Activated CD4-positive, alpha-beta memory T cell treated with anti-CD3 and anti-CD28 coated beads, Interleukin-2, amount 10 ng/mL, durations not matched to agents 7 days and 5 days (primary cell): ENCODE measurements at regions of chr6 and their contacts with region 1.

Region 1: GRCh38 chr6:20202324-20202658 is 10.0 kb downstream of the MBOAT1 start:
- DNase-seq: no peak
- H3K4me3 Mint-ChIP-seq: no peak overlapping the region
- H3K27ac Mint-ChIP-seq: peak overlapping the region; percentile 22
- H3K4me1 Mint-ChIP-seq: peaks cover 80% of the 10 kb centered on the region
- H3K27me3 Mint-ChIP-seq: no peaks in the 10 kb centered on the region

Region 2: GRCh38 chr6:20096506-20096905 is 105.8 kb before region 1 on chr6:
- CTCF ChIA-PET with region 1: no interaction called
- POLR2A ChIA-PET with region 1: no interaction called
- DNase-seq: no peak
- H3K4me3 Mint-ChIP-seq: no peak overlapping the region
- H3K27ac Mint-ChIP-seq: no peak overlapping the region
- H3K4me1 Mint-ChIP-seq: no peaks in the 10 kb centered on the region
- H3K27me3 Mint-ChIP-seq: no peaks in the 10 kb centered on the region

Region 3: GRCh38 chr6:20173833-20174792 is 28.2 kb before region 1 on chr6:
- CTCF ChIA-PET with region 1: interaction called, 4 read pairs
- POLR2A ChIA-PET with region 1: interaction called, 10 read pairs
- DNase-seq: no peak
- H3K4me3 Mint-ChIP-seq: peak overlapping the region; percentile 42
- H3K27ac Mint-ChIP-seq: peak overlapping the region; percentile 79
- H3K4me1 Mint-ChIP-seq: peaks cover 34% of the 10 kb centered on the region
- H3K27me3 Mint-ChIP-seq: no peaks in the 10 kb centered on the region

Region 4: DNA sequence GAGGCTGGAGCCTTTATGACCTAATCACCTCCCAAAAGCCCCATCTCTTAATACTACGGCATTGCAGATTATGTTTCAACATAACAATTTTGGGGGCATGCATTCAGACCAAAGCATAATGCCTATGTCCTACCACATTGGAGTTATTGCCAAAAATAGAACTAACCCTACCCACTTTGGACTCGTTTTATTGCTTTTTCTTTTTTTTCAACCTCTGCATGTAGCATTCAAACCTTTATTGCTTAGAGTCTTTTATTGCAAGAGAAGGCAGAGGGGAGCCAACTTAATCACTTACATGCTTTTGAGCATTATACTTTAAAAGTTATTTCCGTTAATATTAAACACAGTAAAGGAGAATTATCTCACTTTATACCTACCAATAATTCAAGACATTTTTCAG is 18.1 kb after region 1 on chr6:
- CTCF ChIA-PET with region 1: no interaction called
- POLR2A ChIA-PET with region 1: no interaction called
- DNase-seq: no peak
- H3K4me3 Mint-ChIP-seq: no peak overlapping the region
- H3K27ac Mint-ChIP-seq: no peak overlapping the region
- H3K4me1 Mint-ChIP-seq: no peaks in the 10 kb centered on the region
- H3K27me3 Mint-ChIP-seq: no peaks in the 10 kb centered on the region